WTC11 (cell line): ENCODE measurements at regions of chr10 and their contacts with region 1.

Region 1: DNA sequence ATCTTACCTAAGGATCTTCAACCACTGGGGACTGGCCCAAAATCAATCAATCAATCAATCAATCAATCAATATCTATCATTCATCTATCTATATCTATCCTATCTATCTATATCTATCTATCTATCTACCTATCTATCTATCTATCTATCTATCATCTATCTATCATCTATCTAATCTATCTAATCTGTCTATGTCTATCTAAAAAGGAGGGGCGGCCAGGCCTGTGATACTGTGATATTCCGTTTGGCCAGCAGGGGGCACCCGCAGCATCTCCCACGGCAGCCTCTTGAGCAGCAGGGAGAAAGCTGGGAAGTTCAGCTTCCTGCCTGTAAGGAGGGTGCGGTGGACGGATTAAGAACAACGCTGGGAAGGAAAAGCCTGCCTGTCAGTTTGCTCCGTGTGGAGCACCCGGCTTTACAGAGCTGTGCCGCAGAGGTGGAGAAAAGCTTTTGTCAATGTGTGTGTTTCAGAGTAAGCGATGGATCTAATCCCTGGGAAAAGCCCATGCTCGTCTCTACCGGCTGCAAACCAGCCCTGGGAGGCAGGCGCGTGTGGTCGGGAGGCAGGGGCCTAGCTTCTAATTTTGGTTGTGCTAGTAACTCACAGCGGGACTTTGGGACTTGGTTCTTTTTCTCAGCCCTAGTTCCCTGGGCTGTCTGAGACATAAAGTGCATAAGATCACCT is 125.0 kb downstream of the SH2D4B start:
- DNase-seq: peak; percentile 89
- ATAC-seq: peak; percentile 83
- H3K4me3 Mint-ChIP-seq: peak overlapping the region; percentile 64
- H3K27ac Mint-ChIP-seq: peak overlapping the region; percentile 55
- H3K4me1 Mint-ChIP-seq: peaks cover 18% of the 10 kb centered on the region
- H3K27me3 Mint-ChIP-seq: no peaks in the 10 kb centered on the region
- CTCF ChIP-seq: peak; percentile 88

Region 2: GRCh38 chr10:80382989-80383388 is 279.7 kb before region 1 on chr10:
- CTCF ChIA-PET with region 1: interaction called, 15 read pairs
- POLR2A ChIA-PET with region 1: interaction called, 3 read pairs
- DNase-seq: peak; percentile 44
- ATAC-seq: peak; percentile 56
- H3K4me3 Mint-ChIP-seq: no peak overlapping the region
- H3K27ac Mint-ChIP-seq: 0 out of 2 replicates have a peak overlapping the region, but pooled peaks have one; percentile 12
- H3K4me1 Mint-ChIP-seq: peaks cover 5% of the 10 kb centered on the region; the same call in 1 of the 2 replicates
- H3K27me3 Mint-ChIP-seq: no peaks in the 10 kb centered on the region
- CTCF ChIP-seq: no peak; the same call in 1 of the 2 replicates

Region 3: GRCh38 chr10:80506189-80506575 is 156.5 kb before region 1 on chr10:
- CTCF ChIA-PET with region 1: interaction called, 18 read pairs
- POLR2A ChIA-PET with region 1: no interaction called
- DNase-seq: no peak
- ATAC-seq: no peak
- H3K4me3 Mint-ChIP-seq: no peak overlapping the region
- H3K27ac Mint-ChIP-seq: peak overlapping the region; percentile 36; the same call in 1 of the 2 replicates
- H3K4me1 Mint-ChIP-seq: peaks cover 37% of the 10 kb centered on the region
- H3K27me3 Mint-ChIP-seq: no peaks in the 10 kb centered on the region
- CTCF ChIP-seq: no peak

Region 4: GRCh38 chr10:80518807-80519360 is 143.8 kb before region 1 on chr10:
- CTCF ChIA-PET with region 1: no interaction called
- POLR2A ChIA-PET with region 1: no interaction called
- DNase-seq: no peak
- ATAC-seq: no peak
- H3K4me3 Mint-ChIP-seq: no peak overlapping the region
- H3K27ac Mint-ChIP-seq: no peak overlapping the region
- H3K4me1 Mint-ChIP-seq: peaks cover 6% of the 10 kb centered on the region
- H3K27me3 Mint-ChIP-seq: no peaks in the 10 kb centered on the region
- CTCF ChIP-seq: no peak

Region 5: GRCh38 chr10:80681142-80681541 is 18.4 kb after region 1 on chr10:
- CTCF ChIA-PET with region 1: interaction called, 32 read pairs
- POLR2A ChIA-PET with region 1: no interaction called
- DNase-seq: no peak
- ATAC-seq: no peak
- H3K4me3 Mint-ChIP-seq: no peak overlapping the region
- H3K27ac Mint-ChIP-seq: no peak overlapping the region
- H3K4me1 Mint-ChIP-seq: peaks cover 4% of the 10 kb centered on the region
- H3K27me3 Mint-ChIP-seq: no peaks in the 10 kb centered on the region
- CTCF ChIP-seq: no peak

Region 6: GRCh38 chr10:80805343-80806020 is 142.8 kb after region 1 on chr10:
- CTCF ChIA-PET with region 1: no interaction called
- POLR2A ChIA-PET with region 1: no interaction called
- DNase-seq: no peak
- ATAC-seq: peak; percentile 66
- H3K4me3 Mint-ChIP-seq: no peak overlapping the region
- H3K27ac Mint-ChIP-seq: no peak overlapping the region
- H3K4me1 Mint-ChIP-seq: 0 out of 2 replicates have a peak, but pooled peaks cover 4% of the 10 kb centered on the region
- H3K27me3 Mint-ChIP-seq: no peaks in the 10 kb centered on the region
- CTCF ChIP-seq: no peak

Region 7: GRCh38 chr10:80855348-80855971 is 192.7 kb after region 1 on chr10:
- CTCF ChIA-PET with region 1: interaction called, 11 read pairs
- POLR2A ChIA-PET with region 1: no interaction called
- DNase-seq: peak; percentile 71
- ATAC-seq: peak; percentile 99
- H3K4me3 Mint-ChIP-seq: no peak overlapping the region
- H3K27ac Mint-ChIP-seq: no peak overlapping the region
- H3K4me1 Mint-ChIP-seq: peaks cover 20% of the 10 kb centered on the region
- H3K27me3 Mint-ChIP-seq: peaks cover 4% of the 10 kb centered on the region; the same call in 1 of the 2 replicates
- CTCF ChIP-seq: 0 out of 2 replicates have a peak, but pooled peaks have one; percentile 27

Region 8: GRCh38 chr10:80945264-80945880 is 282.7 kb after region 1 on chr10:
- CTCF ChIA-PET with region 1: interaction called, 27 read pairs
- POLR2A ChIA-PET with region 1: no interaction called
- DNase-seq: no peak
- ATAC-seq: peak; percentile 98
- H3K4me3 Mint-ChIP-seq: no peak overlapping the region
- H3K27ac Mint-ChIP-seq: no peak overlapping the region
- H3K4me1 Mint-ChIP-seq: peaks cover 48% of the 10 kb centered on the region
- H3K27me3 Mint-ChIP-seq: no peaks in the 10 kb centered on the region; the same call in 1 of the 2 replicates
- CTCF ChIP-seq: peak; percentile 45; the same call in 1 of the 2 replicates

Region 9: GRCh38 chr10:81179805-81180452 is 517.2 kb after region 1 on chr10:
- CTCF ChIA-PET with region 1: interaction called, 44 read pairs
- POLR2A ChIA-PET with region 1: no interaction called
- DNase-seq: peak; percentile 18
- ATAC-seq: peak; percentile 91
- H3K4me3 Mint-ChIP-seq: no peak overlapping the region
- H3K27ac Mint-ChIP-seq: peak overlapping the region; percentile 37
- H3K4me1 Mint-ChIP-seq: peaks cover 10% of the 10 kb centered on the region
- H3K27me3 Mint-ChIP-seq: no peaks in the 10 kb centered on the region
- CTCF ChIP-seq: no peak